CD4-positive, alpha-beta T cell (primary cell): ENCODE measurements at regions of chr15 and their contacts with region 1.

Region 1: GRCh38 chr15:76730262-76730661 is 174.9 kb downstream of the SCAPER start:
- DNase-seq: no peak
- ATAC-seq: no peak
- H3K4me3 ChIP-seq: no peak overlapping the region
- H3K4me3 Mint-ChIP-seq: no peak overlapping the region
- H3K27ac ChIP-seq: no peak overlapping the region
- H3K27ac Mint-ChIP-seq: no peak overlapping the region
- H3K4me1 ChIP-seq: no peaks in the 10 kb centered on the region
- H3K4me1 Mint-ChIP-seq: no peaks in the 10 kb centered on the region
- H3K27me3 ChIP-seq: no peaks in the 10 kb centered on the region
- H3K27me3 Mint-ChIP-seq: no peaks in the 10 kb centered on the region
- CTCF ChIP-seq: no peak

Region 2: GRCh38 chr15:76235186-76235826 is 495.0 kb before region 1 on chr15:
- CTCF ChIA-PET with region 1: no interaction called
- POLR2A ChIA-PET with region 1: no interaction called
- intact Hi-C with region 1: loop called in 1 of 2 experiments (anchors 10 kb)
- DNase-seq: peak in 3 of 14 experiments; percentile 44 to 52 (median 45)
- ATAC-seq: no peak
- H3K4me3 ChIP-seq: no peak overlapping the region
- H3K4me3 Mint-ChIP-seq: no peak overlapping the region
- H3K27ac ChIP-seq: no peak overlapping the region
- H3K27ac Mint-ChIP-seq: no peak overlapping the region
- H3K4me1 ChIP-seq: no peaks in the 10 kb centered on the region
- H3K4me1 Mint-ChIP-seq: no peaks in the 10 kb centered on the region
- H3K27me3 ChIP-seq: no peaks in the 10 kb centered on the region
- H3K27me3 Mint-ChIP-seq: no peaks in the 10 kb centered on the region
- CTCF ChIP-seq: peak; percentile 62